Right cardiac atrium (tissue), 5 donors: ENCODE measurements at regions of chr13 and their contacts with region 1.

Region 1: GRCh38 chr13:27251166-27252091 is at the start of gene RPL21:
- DNase-seq: peak; percentile 98 to 99 (median 98)
- ATAC-seq: peak; percentile 99
- H3K4me3 ChIP-seq: peak within 1 kb of the TSS; percentile 96
- H3K27ac ChIP-seq: peak within 1 kb of the TSS; percentile 84
- H3K4me1 ChIP-seq: no peaks in the 10 kb centered on the region
- H3K27me3 ChIP-seq: no peaks in the 10 kb centered on the region
- total RNA-seq, gene RPL21: 723 to 895 (median 850) TPM

Region 2: GRCh38 chr13:27171827-27172494 is 79.5 kb before region 1 on chr13:
- intact Hi-C with region 1: loop called in 2 of 4 experiments (anchors 5 to 10 kb)
- DNase-seq: peak; percentile 94 to 98 (median 97)
- ATAC-seq: peak; percentile 98 to 99
- H3K4me3 ChIP-seq: peak overlapping the region; percentile 93
- H3K27ac ChIP-seq: peak overlapping the region; percentile 85
- H3K4me1 ChIP-seq: peaks cover 6% of the 10 kb centered on the region
- H3K27me3 ChIP-seq: no peaks in the 10 kb centered on the region

Region 3: DNA sequence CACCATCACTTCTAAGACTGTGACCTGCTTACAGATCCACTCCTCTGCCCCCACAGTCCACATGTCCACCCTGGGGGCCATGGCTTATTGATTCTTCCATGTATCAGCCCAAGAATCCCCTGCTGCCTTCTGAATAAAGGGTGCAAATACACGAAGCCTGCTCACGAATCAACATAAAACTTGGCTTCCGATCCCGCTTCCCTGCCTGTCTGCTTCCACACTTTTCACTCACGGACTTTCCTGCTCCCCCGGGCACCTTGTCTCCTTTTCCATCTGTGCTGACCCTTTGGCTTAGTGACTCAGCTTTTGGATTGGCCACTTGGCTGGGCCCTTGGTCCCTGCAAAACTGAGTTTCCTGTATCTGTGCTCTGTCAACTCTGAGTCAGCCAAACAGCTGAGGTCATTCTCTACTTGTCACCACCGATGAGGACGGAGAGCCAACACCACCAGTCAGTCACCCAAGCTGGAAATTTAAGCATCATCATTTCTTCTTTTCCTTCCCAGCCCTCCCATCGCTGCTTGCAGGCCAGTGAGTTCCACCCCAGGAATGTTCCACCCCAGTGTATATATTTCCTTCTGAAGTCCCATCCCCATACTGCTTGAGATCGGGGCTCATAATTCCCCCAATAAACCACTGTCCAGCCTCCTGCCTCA is 68.5 kb before region 1 on chr13:
- intact Hi-C with region 1: loop called in 3 of 4 experiments (anchors 10 kb)
- DNase-seq: peak; percentile 76 to 84 (median 78)
- ATAC-seq: peak; percentile 95 to 99
- H3K4me3 ChIP-seq: no peak overlapping the region
- H3K27ac ChIP-seq: peak overlapping the region; percentile 8
- H3K4me1 ChIP-seq: peaks cover 7% of the 10 kb centered on the region
- H3K27me3 ChIP-seq: no peaks in the 10 kb centered on the region

Region 4: GRCh38 chr13:27321468-27322431 is 70.3 kb after region 1 on chr13:
- intact Hi-C with region 1: no loop called
- DNase-seq: no peak
- ATAC-seq: no peak
- H3K4me3 ChIP-seq: no peak overlapping the region
- H3K27ac ChIP-seq: no peak overlapping the region
- H3K4me1 ChIP-seq: no peaks in the 10 kb centered on the region
- H3K27me3 ChIP-seq: peaks cover 2% of the 10 kb centered on the region

Region 5: GRCh38 chr13:27620377-27621115 is 369.1 kb after region 1 on chr13 and contains the start of gene LNX2:
- intact Hi-C with region 1: no loop called
- DNase-seq: peak; percentile 99 to 100 (median 100)
- ATAC-seq: peak; percentile 99
- H3K4me3 ChIP-seq: peak within 1 kb of the TSS; percentile 81
- H3K27ac ChIP-seq: peak within 1 kb of the TSS; percentile 99
- H3K4me1 ChIP-seq: peaks cover 9% of the 10 kb centered on the region
- H3K27me3 ChIP-seq: no peaks in the 10 kb centered on the region
- total RNA-seq, gene LNX2: 9.1 to 15.3 (median 10.8) TPM